Cardiac septum (tissue), 1 donor: ENCODE measurements at regions of chr6 and their contacts with region 1.

Region 1: GRCh38 chr6:158040051-158040803 is 58.6 kb downstream of the SYNJ2 start:
- DNase-seq: peak; percentile 70

Region 2: GRCh38 chr6:157693867-157694266 is 346.4 kb before region 1 on chr6:
- intact Hi-C with region 1: no loop called
- DNase-seq: peak; percentile 80

Region 3: GRCh38 chr6:157981395-157982296 is 58.6 kb before region 1 on chr6 and contains the start of gene SYNJ2:
- intact Hi-C with region 1: loop called (anchors 5 kb)
- DNase-seq: peak; percentile 94
- total RNA-seq, gene SYNJ2: 24.0 TPM

Region 4: DNA sequence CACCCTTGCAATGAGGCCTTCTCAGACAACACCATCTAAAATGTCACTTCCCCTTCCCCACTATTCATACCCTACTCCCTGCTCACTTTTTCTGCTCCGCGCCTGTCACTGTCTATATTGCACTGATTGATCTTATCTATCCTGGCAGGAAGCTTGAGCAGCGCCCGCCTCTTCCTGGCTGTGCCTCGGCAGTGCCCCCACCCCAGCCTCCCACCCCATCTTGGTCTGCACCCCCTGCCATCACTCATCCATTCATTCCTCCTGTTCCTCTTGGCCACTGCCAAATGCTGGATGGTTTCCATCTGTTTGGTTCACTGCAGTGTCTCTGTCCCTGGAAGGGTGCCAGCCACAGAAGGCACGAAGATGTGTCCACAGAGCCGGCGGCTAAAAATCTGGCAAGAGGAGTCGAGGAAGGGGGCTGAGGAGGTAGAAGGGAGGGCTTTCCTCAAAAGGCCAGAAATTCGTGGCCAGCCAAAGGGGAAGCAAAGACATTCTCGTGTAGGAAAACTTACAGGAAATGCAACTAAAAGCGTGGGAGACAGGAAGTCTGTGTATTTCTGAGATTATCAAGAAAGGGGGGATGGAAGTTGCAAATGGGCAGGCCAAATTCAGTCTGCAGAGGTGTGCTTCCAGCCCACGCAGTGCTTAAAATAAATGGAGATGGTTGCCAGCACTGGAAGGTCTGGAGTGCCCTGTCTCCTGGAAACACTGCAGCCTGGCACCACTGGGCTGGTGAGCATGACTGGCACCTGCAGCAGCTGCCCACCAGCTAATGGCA is 30.9 kb before region 1 on chr6:
- intact Hi-C with region 1: loop called (anchors 2 kb)
- DNase-seq: no peak

Region 5: DNA sequence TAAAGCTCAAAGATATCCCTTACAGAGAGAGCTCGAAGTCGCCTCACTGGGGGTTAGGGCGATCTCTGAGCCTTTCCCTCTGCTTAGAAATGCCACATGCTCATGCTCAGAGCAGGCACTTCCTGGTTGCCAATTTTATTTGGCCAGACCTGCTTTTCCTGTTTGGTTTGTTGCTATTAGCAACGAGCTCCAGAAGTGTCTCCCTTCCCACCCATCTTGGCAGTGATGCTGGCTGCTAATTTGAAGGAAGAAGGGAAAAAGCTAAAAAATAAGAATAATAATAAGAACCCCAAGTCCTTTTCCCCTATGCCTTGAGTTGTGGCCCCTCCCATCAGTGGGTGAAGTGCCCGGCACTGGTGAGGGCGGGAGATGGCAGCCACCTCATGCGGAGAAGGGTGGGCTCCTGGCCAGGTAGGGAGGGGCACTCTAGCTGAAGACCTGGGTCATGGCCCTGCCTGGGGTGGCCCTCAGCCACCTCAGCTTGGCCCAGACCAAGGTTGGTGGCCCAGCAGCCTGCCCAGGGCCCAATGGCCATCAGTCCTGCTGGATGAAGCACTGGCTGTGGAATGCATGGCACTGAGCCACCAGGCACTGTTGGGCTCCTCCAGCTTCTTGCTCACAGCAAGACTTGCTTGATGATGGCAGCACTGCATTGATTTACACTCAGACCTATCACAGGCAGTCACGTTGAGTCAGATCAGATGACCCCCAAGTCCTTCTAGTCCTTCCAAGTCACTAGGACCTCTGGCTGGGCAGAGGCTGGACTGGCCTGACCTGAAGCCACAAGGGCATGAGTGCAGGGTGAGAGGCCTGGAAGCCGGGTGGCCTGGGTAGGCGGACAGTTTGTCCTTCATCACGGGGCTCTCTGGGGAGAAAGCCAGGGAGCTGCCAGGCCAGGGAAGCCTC is 20.5 kb after region 1 on chr6:
- intact Hi-C with region 1: loop called (anchors 2 kb)
- DNase-seq: peak; percentile 86